ENCODE measurements at regions of chr9 and their contacts with region 1.

Region 1: DNA sequence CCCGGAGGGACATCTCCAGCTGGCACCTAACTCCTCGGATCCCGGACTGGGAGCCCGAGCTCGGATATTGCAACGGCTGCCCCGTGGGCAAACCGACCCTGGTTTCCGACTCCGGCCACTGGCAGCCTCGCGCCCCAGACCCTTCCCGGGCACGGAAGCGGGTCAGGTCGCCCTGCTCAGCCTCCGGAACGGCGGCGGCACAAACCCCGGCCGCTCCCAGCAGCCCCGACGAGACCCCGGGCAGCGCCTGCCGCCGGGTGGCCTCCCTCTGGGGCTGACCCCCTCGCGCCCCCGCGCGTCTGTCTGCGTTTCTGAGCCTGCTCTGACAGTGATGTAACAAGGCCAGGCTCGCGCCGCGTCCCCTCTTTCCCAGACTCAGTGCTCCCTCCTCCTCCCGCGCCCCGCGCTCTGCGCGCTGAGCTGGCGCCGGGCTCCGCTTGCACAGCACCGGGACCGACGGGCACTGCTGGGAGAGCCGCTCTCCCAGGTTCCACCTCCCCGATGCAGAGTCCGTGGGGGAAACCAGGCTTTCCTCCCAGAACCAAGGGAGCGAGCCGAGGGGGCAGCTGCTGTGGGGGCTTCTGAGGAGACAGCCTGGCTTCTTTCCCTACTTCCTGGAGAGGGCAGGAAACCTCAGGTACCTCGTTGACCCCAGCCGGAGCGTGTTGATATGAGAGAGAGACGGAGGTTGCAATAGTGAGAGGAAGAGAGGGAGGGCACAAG is at the start of gene TMEM215:
- DNase-seq: peak; percentile 84
- ATAC-seq: peak; percentile 84
- H3K4me3 Mint-ChIP-seq: peak within 1 kb of the TSS; percentile 74
- H3K27ac Mint-ChIP-seq: no peak within 1 kb of the TSS
- H3K4me1 Mint-ChIP-seq: peaks cover 6% of the 10 kb centered on the region
- H3K27me3 Mint-ChIP-seq: peaks cover 99% of the 10 kb centered on the region
- CTCF ChIP-seq: no peak
- total RNA-seq, gene TMEM215: 0.21 to 0.34 TPM (median 0.31 TPM) in 3 replicates

Region 2: DNA sequence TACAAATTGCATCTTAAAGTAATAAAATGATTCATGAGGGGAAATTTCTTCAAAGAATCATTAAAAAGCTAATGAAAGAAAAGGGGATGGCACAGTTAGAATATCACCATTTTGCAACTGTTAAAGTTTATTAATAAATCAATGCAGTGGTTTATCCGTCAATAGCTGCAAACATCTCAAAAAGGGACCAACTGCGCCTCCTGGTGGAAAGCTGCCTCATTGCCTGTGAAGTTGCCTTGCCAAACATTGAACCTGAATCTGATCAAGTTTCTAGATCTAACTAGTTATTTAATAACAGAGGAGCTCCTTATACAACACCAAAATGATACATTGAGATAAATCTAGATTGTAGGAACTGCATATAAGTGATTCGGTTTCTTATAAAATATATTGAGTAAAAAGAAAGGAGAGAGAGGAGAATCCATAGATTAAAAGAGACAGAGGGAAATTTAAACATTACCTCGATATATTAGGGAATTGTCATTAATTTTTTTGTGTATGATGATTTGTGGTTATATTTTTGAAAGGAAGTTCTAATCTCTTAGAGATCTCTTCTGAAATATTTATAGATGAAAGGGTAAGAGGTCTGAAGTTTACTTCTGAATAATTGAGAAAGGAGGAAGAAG is 203.5 kb before region 1 on chr9:
- CTCF ChIA-PET with region 1: interaction called, 12 read pairs
- POLR2A ChIA-PET with region 1: no interaction called
- DNase-seq: peak; percentile 76
- ATAC-seq: no peak
- H3K4me3 Mint-ChIP-seq: no peak overlapping the region
- H3K27ac Mint-ChIP-seq: no peak overlapping the region
- H3K4me1 Mint-ChIP-seq: peaks cover 11% of the 10 kb centered on the region
- H3K27me3 Mint-ChIP-seq: no peaks in the 10 kb centered on the region
- CTCF ChIP-seq: peak; percentile 85

Region 3: GRCh38 chr9:32738501-32739172 is 44.7 kb before region 1 on chr9:
- CTCF ChIA-PET with region 1: no interaction called
- POLR2A ChIA-PET with region 1: no interaction called
- DNase-seq: no peak
- ATAC-seq: no peak
- H3K4me3 Mint-ChIP-seq: no peak overlapping the region
- H3K27ac Mint-ChIP-seq: no peak overlapping the region
- H3K4me1 Mint-ChIP-seq: peaks cover 20% of the 10 kb centered on the region
- H3K27me3 Mint-ChIP-seq: no peaks in the 10 kb centered on the region
- CTCF ChIP-seq: no peak

Measured in WTC11 (cell line).